ENCODE measurements at regions of chr16 and their contacts with region 1.

Region 1: DNA sequence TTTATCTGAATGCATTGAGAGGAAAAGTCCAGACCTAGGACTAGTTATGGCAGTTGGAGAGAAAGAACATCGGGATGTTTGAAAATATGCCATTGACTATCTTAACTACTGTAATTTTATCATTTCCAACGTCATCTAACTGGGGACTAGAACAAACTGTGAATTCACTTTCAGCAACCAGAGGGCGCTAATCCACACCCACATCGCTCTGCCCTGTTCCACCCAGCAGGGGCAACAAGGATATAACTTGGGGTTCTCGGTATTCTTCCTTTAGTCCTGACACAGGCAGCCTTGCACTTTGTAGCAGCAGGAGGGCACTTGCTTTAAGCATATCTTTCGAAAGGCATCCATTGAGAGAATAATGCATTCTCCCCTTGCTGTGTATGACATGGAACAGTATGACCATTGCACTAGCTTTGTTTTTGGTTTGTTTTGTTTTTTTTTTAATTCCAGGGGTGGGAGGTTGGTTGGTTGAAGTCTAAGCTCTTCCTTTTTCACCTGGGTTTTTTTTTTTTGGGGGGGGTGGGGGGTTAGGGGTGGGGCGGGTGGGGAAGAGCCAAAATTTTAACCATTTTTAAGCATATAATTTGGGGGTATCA is 31.5 kb downstream of the SIAH1 start:
- DNase-seq: peak; percentile 78
- H3K4me3 Mint-ChIP-seq: no peak overlapping the region
- H3K27ac Mint-ChIP-seq: peak overlapping the region; percentile 55
- H3K4me1 Mint-ChIP-seq: peaks cover 15% of the 10 kb centered on the region
- H3K27me3 Mint-ChIP-seq: no peaks in the 10 kb centered on the region

Region 2: GRCh38 chr16:48256579-48257177 is 97.0 kb before region 1 on chr16:
- CTCF ChIA-PET with region 1: no interaction called
- DNase-seq: no peak
- H3K4me3 Mint-ChIP-seq: no peak overlapping the region
- H3K27ac Mint-ChIP-seq: no peak overlapping the region
- H3K4me1 Mint-ChIP-seq: no peaks in the 10 kb centered on the region
- H3K27me3 Mint-ChIP-seq: no peaks in the 10 kb centered on the region

Region 3: DNA sequence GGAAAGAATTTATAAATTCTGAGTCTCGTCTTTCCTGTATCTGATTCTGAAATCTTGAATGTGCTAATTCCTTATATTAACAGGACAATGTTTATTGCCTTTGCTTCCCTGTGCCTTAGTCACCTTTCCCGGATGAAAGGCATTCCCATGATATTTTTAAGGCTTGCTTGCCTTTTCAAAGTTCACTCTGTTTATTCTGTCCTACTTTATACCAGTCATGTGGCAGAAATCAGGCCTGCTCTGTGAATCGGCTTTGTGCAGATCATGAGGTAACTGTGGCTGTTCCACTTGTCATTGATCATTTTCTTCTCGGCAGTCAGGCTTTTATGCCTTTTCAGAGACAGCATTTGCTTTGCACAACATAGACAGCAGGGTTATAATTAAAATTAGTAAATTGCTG is 77.6 kb before region 1 on chr16:
- CTCF ChIA-PET with region 1: no interaction called
- DNase-seq: no peak
- H3K4me3 Mint-ChIP-seq: no peak overlapping the region
- H3K27ac Mint-ChIP-seq: no peak overlapping the region
- H3K4me1 Mint-ChIP-seq: no peaks in the 10 kb centered on the region
- H3K27me3 Mint-ChIP-seq: no peaks in the 10 kb centered on the region

Region 4: DNA sequence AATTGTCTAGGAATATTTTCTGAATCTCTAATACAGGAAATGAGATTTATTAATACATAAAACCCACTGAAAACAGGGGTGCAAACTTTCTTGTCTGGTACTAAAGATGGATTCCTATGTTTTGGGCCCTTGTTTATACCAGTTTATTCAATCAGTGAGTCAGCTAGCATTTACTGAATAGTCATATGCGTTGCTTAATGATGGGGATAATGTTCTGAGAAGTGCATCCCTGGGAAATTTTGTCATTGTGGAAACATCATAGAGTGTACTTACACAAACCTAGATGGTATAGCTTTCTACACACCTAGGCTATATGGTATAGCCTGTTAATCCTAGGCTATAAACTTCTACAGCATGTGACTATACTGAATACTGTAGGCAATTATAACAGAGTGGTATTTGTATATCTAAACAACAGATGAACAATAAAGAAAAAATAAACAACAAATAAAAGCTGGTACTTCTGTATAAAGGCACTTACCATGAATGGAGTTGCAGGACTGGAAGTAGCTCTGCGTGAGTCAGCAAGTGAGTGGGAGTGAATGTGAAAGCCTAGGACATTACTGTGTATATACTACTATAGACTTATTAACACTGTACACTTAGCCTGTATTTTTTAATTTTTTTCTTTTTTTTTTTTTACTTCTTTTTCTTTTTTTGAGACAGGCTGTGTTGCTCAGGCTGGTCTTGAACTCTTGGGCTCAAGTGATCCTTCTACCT is 32.2 kb before region 1 on chr16:
- CTCF ChIA-PET with region 1: no interaction called
- DNase-seq: no peak
- H3K4me3 Mint-ChIP-seq: no peak overlapping the region
- H3K27ac Mint-ChIP-seq: no peak overlapping the region
- H3K4me1 Mint-ChIP-seq: peaks cover 43% of the 10 kb centered on the region
- H3K27me3 Mint-ChIP-seq: no peaks in the 10 kb centered on the region

Region 5: GRCh38 chr16:48526058-48526957 is 172.6 kb after region 1 on chr16:
- CTCF ChIA-PET with region 1: interaction called, 15 read pairs
- DNase-seq: peak; percentile 57
- H3K4me3 Mint-ChIP-seq: no peak overlapping the region
- H3K27ac Mint-ChIP-seq: no peak overlapping the region
- H3K4me1 Mint-ChIP-seq: no peaks in the 10 kb centered on the region
- H3K27me3 Mint-ChIP-seq: peaks cover 11% of the 10 kb centered on the region

Measured in activated naive CD4-positive, alpha-beta T cell treated with anti-CD3 and anti-CD28 coated beads, Interleukin-2, amount 10 ng/mL, durations not matched to agents 7 days and 5 days (primary cell).